T-cell (primary cell): ENCODE measurements at regions of chr10 and their contacts with region 1.

Region 1: DNA sequence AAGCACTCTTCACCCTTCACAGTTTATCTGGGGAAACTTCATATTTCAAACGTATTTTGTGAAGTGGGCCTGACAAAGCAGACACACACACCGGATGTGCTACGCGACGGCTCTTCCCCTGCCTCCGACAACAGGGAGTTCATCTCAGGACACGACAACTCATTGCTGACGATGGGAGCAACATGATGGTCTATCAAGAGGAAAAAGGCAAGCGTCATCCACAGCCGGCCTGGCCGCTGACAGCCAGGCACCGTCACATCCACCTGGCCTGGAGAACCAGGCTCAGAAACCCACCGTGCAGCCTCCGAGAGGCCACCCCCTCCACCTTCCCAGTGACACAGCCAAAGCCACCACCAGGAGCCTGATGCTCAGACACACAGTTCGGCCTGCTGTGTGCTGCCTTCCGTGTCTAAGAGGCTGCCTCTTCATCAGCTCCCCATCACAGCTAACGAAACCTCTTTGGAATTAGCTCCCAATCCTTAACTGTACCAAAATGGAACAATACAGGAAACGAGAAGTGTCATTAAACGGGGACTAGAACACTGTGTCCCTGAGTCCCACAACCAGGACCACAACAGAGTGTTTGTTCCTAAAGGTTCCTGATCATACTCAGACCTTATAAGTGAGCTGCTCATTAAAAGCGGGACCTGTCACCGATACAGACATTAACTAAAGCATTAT is 76.7 kb downstream of the SFMBT2 start:
- DNase-seq: no peak
- ATAC-seq: no peak
- H3K4me3 ChIP-seq: no peak overlapping the region
- H3K4me3 Mint-ChIP-seq: no peak overlapping the region
- H3K27ac ChIP-seq: no peak overlapping the region
- H3K27ac Mint-ChIP-seq: peak overlapping the region in 1 of 2 donors; percentile 55
- H3K4me1 ChIP-seq: peaks cover 2 to 8% of the 10 kb centered on the region in 2 experiments
- H3K4me1 Mint-ChIP-seq: peaks cover 64 to 75% (median 74%) of the 10 kb centered on the region in 3 donors
- H3K27me3 ChIP-seq: peaks cover 0 to 2% of the 10 kb centered on the region in 2 experiments
- H3K27me3 Mint-ChIP-seq: no peaks in the 10 kb centered on the region

Region 2: GRCh38 chr10:7362471-7362870 is 28.4 kb after region 1 on chr10:
- CTCF ChIA-PET with region 1: no interaction called
- POLR2A ChIA-PET with region 1: interaction called in 1 of 2 experiments, 10 read pairs
- DNase-seq: no peak
- ATAC-seq: no peak
- H3K4me3 ChIP-seq: no peak overlapping the region
- H3K4me3 Mint-ChIP-seq: no peak overlapping the region
- H3K27ac ChIP-seq: no peak overlapping the region
- H3K27ac Mint-ChIP-seq: no peak overlapping the region
- H3K4me1 ChIP-seq: peaks cover 0 to 2% of the 10 kb centered on the region in 2 experiments
- H3K4me1 Mint-ChIP-seq: peaks cover 32 to 49% (median 39%) of the 10 kb centered on the region in 3 donors
- H3K27me3 ChIP-seq: no peaks in the 10 kb centered on the region
- H3K27me3 Mint-ChIP-seq: no peaks in the 10 kb centered on the region

Region 3: DNA sequence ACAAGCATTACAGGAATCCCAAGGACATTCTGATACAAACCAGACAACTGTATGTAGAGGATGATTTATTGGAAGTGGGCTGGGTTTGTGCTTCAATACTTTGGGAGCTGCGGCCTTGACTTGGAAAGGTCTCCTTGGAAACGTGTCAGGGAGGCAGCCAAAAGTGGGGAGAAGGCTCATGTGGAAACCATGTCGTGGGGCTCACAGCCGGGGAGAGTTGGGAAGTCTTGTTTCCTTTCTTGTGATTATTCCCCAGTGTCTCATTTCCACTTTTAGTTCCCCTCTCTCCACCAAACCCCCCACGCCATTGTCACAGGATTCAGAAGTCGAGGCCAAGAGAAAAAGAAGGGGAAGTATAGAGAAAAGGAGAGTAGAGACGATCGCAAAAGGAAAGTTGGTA is 130.6 kb after region 1 on chr10:
- CTCF ChIA-PET with region 1: no interaction called
- POLR2A ChIA-PET with region 1: no interaction called
- DNase-seq: no peak
- ATAC-seq: no peak
- H3K4me3 ChIP-seq: no peak overlapping the region
- H3K4me3 Mint-ChIP-seq: no peak overlapping the region
- H3K27ac ChIP-seq: no peak overlapping the region
- H3K27ac Mint-ChIP-seq: no peak overlapping the region
- H3K4me1 ChIP-seq: no peaks in the 10 kb centered on the region
- H3K4me1 Mint-ChIP-seq: peaks cover under 1 to 15% (median 4%) of the 10 kb centered on the region in 3 donors
- H3K27me3 ChIP-seq: no peaks in the 10 kb centered on the region
- H3K27me3 Mint-ChIP-seq: no peaks in the 10 kb centered on the region